Mammary epithelial cell (primary cell): ENCODE measurements at regions of chr1 and their contacts with region 1.

Region 1: GRCh38 chr1:201348211-201348566 is 29.3 kb downstream of the TNNT2 start:
- DNase-seq: peak; percentile 45
- H3K4me3 ChIP-seq: no peak overlapping the region
- H3K27ac ChIP-seq: no peak overlapping the region
- H3K4me1 ChIP-seq: peaks cover 20% of the 10 kb centered on the region
- H3K27me3 ChIP-seq: no peaks in the 10 kb centered on the region
- CTCF ChIP-seq: peak; percentile 72 to 84

Region 2: DNA sequence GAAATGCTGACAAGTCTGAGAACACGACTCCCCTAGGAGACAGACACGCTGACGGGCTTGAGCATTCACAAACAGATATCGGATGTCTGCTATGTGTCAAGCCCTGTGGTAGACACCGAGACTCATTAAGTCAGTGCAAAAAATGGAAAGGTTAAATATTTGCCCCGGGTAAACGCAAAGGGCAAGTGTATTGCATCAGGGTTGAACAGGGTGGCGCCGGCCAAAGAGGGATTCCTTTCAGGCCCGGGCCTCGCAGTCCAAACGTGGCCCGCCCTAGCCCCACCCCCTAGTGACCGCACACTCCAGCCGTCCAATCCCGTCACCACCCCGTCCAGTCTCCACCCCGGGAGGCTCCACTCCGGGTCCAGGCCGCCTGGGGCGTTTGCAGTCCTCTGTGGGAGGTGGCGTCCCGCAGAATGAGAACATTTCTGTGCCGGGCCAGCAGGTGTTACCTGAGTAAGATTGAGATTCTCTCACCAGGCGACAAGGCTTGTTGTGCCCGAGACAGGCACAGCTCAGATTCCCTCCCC is 177.6 kb before region 1 on chr1:
- CTCF ChIA-PET with region 1: interaction called, 11 read pairs
- dilution Hi-C with region 1: no loop called
- in situ Hi-C with region 1: no loop called
- intact Hi-C with region 1: no loop called
- DNase-seq: peak; percentile 92
- H3K4me3 ChIP-seq: peak overlapping the region; percentile 44 to 50 (median 45)
- H3K27ac ChIP-seq: peak overlapping the region; percentile 36
- H3K4me1 ChIP-seq: peaks cover 28% of the 10 kb centered on the region
- H3K27me3 ChIP-seq: no peaks in the 10 kb centered on the region
- CTCF ChIP-seq: no peak

Region 3: DNA sequence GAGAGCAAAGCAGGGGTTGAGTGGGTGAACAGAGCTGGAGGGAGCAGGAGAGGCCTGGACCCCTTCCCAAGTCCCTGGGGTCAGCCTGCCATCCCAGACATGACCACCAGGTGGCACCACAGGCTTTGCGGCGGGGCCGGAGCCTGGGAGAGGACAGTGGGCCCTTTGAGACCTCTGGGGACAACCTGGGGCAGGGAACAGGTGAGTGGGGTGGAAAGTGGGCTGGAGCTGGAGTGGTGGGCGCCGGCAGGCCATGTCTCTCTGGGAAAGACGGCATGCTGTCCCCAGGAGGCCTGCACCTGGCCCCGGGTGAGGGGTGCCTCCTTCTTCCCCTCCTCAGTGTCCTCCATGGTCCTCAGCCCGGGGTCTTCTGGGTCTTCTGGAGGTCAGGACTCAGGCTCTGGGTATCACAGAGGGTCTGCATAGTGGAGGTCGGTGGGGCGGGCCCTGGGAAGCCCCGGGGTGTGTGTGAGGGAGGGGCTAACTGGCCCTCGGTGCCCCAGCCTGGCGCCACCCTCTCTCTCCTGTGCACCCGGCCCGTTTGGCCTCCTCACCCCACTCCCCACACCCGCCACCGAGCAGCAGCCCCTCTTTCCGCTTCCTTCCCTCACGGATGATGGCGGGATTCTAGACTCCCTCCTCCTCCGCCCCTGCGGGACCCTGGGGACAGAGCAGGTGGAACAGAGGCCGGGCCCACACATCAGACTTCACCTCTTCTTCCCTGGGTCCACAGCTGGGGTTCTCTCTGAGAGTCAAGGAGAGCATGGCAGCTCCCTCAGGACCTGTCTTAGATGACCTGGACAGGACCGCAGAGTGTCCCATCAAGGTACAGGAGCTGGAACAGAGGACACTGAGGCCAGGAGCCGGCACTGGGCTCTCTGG is 93.3 kb before region 1 on chr1:
- CTCF ChIA-PET with region 1: interaction called, 12 read pairs
- dilution Hi-C with region 1: no loop called
- in situ Hi-C with region 1: no loop called
- intact Hi-C with region 1: loop called (anchors 1 kb)
- DNase-seq: peak; percentile 34
- H3K4me3 ChIP-seq: no peak overlapping the region
- H3K27ac ChIP-seq: no peak overlapping the region
- H3K4me1 ChIP-seq: peaks cover 11% of the 10 kb centered on the region
- H3K27me3 ChIP-seq: no peaks in the 10 kb centered on the region
- CTCF ChIP-seq: peak; percentile 89 to 99

Region 4: GRCh38 chr1:201309426-201309825 is 38.8 kb before region 1 on chr1:
- CTCF ChIA-PET with region 1: interaction called, 10 read pairs
- dilution Hi-C with region 1: no loop called
- in situ Hi-C with region 1: no loop called
- intact Hi-C with region 1: loop called (anchors 1 kb)
- DNase-seq: peak; percentile 94
- H3K4me3 ChIP-seq: no peak overlapping the region
- H3K27ac ChIP-seq: peak overlapping the region; percentile 98
- H3K4me1 ChIP-seq: peaks cover 64% of the 10 kb centered on the region
- H3K27me3 ChIP-seq: no peaks in the 10 kb centered on the region
- CTCF ChIP-seq: peak in 1 of 2 donors; percentile 30

Region 5: GRCh38 chr1:201369209-201369608 is 21.0 kb after region 1 on chr1:
- CTCF ChIA-PET with region 1: no interaction called
- dilution Hi-C with region 1: no loop called
- in situ Hi-C with region 1: no loop called
- intact Hi-C with region 1: no loop called
- DNase-seq: no peak
- H3K4me3 ChIP-seq: no peak overlapping the region
- H3K27ac ChIP-seq: no peak overlapping the region
- H3K4me1 ChIP-seq: no peaks in the 10 kb centered on the region
- H3K27me3 ChIP-seq: no peaks in the 10 kb centered on the region
- CTCF ChIP-seq: no peak

Region 6: DNA sequence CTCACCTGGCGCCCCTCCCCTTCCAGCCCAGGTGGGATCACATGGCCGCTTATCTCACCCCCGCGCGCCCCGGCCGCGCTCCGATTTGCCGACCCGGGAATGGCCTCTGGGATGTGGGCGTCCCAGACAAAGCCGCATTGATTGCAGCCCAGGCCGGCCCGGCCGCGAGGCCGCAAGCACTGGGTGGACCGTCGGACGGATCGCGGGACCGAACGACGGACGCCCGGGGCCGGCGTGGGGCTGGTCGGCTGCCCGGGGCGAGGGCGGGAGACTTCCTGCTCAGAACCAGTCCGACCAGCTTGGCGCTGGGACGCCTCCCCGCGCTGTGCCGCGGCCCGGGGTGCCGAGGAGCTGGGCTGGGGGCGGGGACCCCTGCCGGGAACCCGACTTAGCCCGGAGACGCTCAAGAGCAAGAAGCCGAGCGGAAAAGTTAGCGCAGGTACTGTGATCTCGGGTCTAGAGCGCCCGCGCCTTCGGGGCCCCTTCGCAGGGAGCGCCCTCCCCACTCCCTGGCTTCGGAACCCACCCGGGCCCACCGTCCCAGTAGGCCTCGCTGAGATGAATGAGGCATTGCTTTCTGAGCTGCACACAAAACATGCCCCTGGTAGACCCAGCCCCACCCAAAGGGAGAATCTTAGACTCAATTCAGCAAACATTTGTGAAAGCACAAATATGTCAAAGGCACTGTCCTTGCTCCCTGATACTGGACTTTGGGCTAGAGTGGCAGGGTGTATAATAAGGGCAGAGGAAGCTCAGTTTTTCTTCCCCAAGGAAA is 51.4 kb after region 1 on chr1:
- CTCF ChIA-PET with region 1: no interaction called
- dilution Hi-C with region 1: loop called (anchors 5 kb)
- in situ Hi-C with region 1: no loop called
- intact Hi-C with region 1: no loop called
- DNase-seq: peak; percentile 85
- H3K4me3 ChIP-seq: peak overlapping the region; percentile 88 to 90 (median 90)
- H3K27ac ChIP-seq: peak overlapping the region; percentile 77
- H3K4me1 ChIP-seq: peaks cover 44% of the 10 kb centered on the region
- H3K27me3 ChIP-seq: no peaks in the 10 kb centered on the region
- CTCF ChIP-seq: no peak

Region 7: GRCh38 chr1:201511941-201512539 is 163.9 kb after region 1 on chr1:
- CTCF ChIA-PET with region 1: no interaction called
- dilution Hi-C with region 1: no loop called
- in situ Hi-C with region 1: no loop called
- intact Hi-C with region 1: loop called (anchors 1 kb)
- DNase-seq: no peak
- H3K4me3 ChIP-seq: no peak overlapping the region
- H3K27ac ChIP-seq: no peak overlapping the region
- H3K4me1 ChIP-seq: peaks cover 36% of the 10 kb centered on the region
- H3K27me3 ChIP-seq: no peaks in the 10 kb centered on the region
- CTCF ChIP-seq: no peak

Region 8: GRCh38 chr1:201709564-201710295 is 361.5 kb after region 1 on chr1:
- CTCF ChIA-PET with region 1: no interaction called
- dilution Hi-C with region 1: no loop called
- in situ Hi-C with region 1: no loop called
- intact Hi-C with region 1: no loop called
- DNase-seq: peak; percentile 35
- H3K4me3 ChIP-seq: no peak overlapping the region
- H3K27ac ChIP-seq: no peak overlapping the region
- H3K4me1 ChIP-seq: peaks cover 45% of the 10 kb centered on the region
- H3K27me3 ChIP-seq: no peaks in the 10 kb centered on the region
- CTCF ChIP-seq: peak; percentile 80 to 93